Aorta (tissue), 5 donors: ENCODE measurements at regions of chr9 and their contacts with region 1.

Region 1: DNA sequence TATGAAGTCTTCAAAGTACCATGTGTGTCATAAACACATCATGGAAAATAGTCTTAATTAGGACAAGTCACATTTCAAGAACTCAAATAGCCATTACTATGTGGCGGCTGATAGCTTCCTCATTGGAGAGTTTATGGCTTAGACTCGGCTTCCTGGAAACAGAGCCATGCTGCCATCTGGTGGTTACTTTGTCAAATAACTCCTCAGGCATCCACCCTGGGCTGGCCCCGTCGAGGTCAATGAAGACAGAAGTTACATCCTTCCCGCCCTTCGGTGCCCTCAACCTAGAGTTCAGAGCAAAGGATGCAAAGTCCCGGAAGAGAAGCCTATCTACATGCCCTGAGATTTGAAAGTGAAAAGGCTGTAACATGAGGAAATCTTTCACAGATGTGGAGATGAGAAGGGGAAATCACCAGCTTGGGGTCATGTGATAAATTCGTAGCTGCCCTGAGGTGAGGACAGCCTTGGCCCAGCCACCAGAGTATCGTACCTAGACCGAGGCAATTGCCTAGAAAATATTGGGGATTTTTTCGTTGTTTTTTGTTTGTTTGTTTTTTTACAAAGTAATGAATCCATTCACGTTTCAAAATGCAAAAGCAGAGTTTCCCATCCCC is 45.5 kb upstream of the ZNF169 start:
- DNase-seq: peak; percentile 72 to 78
- ATAC-seq: peak; percentile 89
- H3K4me3 ChIP-seq: no peak overlapping the region
- H3K27ac ChIP-seq: no peak overlapping the region
- H3K4me1 ChIP-seq: no peaks in the 10 kb centered on the region
- H3K27me3 ChIP-seq: no peaks in the 10 kb centered on the region

Region 2: GRCh38 chr9:93893899-93894690 is 319.5 kb before region 1 on chr9:
- intact Hi-C with region 1: no loop called
- DNase-seq: peak in 1 of 2 donors; percentile 58
- ATAC-seq: no peak
- H3K4me3 ChIP-seq: no peak overlapping the region
- H3K27ac ChIP-seq: no peak overlapping the region
- H3K4me1 ChIP-seq: no peaks in the 10 kb centered on the region
- H3K27me3 ChIP-seq: no peaks in the 10 kb centered on the region

Region 3: GRCh38 chr9:94014065-94014654 is 199.5 kb before region 1 on chr9:
- intact Hi-C with region 1: loop called in 1 of 2 experiments (anchors 5 kb)
- DNase-seq: no peak
- ATAC-seq: no peak
- H3K4me3 ChIP-seq: no peak overlapping the region
- H3K27ac ChIP-seq: no peak overlapping the region
- H3K4me1 ChIP-seq: peaks cover 2 to 7% of the 10 kb centered on the region in 2 donors
- H3K27me3 ChIP-seq: no peaks in the 10 kb centered on the region

Region 4: GRCh38 chr9:94065535-94065961 is 148.1 kb before region 1 on chr9:
- intact Hi-C with region 1: loop called (anchors 1 to 2 kb)
- DNase-seq: peak; percentile 82 to 83
- ATAC-seq: peak; percentile 82
- H3K4me3 ChIP-seq: no peak overlapping the region
- H3K27ac ChIP-seq: no peak overlapping the region
- H3K4me1 ChIP-seq: no peaks in the 10 kb centered on the region
- H3K27me3 ChIP-seq: no peaks in the 10 kb centered on the region